ENCODE measurements at regions of chr14 and their contacts with region 1.

Region 1: DNA sequence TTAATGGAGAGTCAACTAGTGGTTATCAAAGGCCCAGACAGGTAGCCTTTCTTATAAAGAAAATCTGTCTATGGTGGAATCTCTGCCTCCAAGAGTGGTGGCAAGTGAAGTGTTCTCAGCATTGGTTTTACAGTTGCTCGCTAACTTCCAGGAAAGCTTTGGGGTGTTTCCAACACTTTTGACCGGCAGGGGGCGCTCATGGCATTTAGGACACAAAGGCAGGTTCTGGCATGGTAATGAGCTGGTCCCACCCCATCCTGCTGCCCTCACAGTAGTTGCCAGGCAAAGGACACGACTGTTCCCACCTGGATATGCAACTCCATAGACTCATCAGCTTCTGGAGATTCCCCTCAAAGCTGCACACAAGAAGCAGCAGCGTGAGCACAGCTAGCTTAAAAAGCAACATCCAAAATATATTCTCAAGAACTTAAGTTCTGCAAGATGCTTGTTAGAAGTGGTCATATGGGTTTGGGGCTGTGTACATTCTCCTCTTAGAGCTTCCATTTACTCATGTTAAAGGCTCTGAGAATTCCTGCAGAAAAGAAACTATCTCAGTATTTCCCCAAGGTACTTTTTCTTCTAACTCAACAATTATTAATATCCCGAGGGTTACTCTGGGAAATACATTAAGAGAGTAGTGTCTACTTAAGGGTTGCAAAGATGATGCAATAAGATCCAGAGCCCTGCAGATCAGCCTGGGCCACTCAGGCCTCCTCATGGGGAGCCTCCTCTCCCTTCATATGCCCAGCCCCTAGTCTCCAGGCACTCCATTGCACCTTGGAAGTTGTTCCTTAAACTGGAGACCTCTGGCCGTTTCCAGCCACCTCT is 14.8 kb downstream of the PROX2 start:
- DNase-seq: peak; percentile 76 to 93 (median 86)
- ATAC-seq: peak; percentile 90
- H3K4me3 ChIP-seq: no peak overlapping the region
- H3K4me3 Mint-ChIP-seq: no peak overlapping the region
- H3K27ac ChIP-seq: no peak overlapping the region
- H3K27ac Mint-ChIP-seq: peak overlapping the region in 3 of 9 donors; percentile 41 to 47 (median 45)
- H3K4me1 ChIP-seq: peaks cover 4 to 6% of the 10 kb centered on the region in 2 donors
- H3K4me1 Mint-ChIP-seq: peaks cover 2 to 21% (median 7%) of the 10 kb centered on the region in 7 donors
- H3K27me3 ChIP-seq: no peaks in the 10 kb centered on the region
- H3K27me3 Mint-ChIP-seq: no peaks in the 10 kb centered on the region

Region 2: DNA sequence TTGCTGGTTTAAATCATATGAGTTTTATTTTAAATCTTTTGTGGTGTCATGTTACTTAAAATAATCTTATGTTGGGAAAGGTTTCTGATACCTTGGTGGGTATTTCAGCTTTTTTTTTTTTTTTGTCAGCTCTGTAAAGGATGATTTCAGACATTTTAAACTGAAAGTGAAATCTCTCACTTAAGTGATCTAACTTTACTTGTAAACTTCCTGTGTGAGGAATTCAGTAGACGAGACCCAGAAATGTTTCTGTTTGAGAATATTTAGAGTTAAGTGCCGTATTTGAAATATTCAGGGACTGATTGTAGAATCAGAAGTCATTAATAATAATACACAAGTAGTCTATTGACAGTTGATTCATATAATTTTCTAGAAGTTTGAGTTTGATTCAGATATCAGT is 23.0 kb before region 1 on chr14:
- CTCF ChIA-PET with region 1: interaction called, 13 read pairs
- POLR2A ChIA-PET with region 1: interaction called, 5 read pairs
- intact Hi-C with region 1: no loop called
- DNase-seq: peak in 7 of 9 donors; percentile 34 to 62 (median 46)
- ATAC-seq: peak; percentile 75
- H3K4me3 ChIP-seq: no peak overlapping the region
- H3K4me3 Mint-ChIP-seq: peak overlapping the region; percentile 30 to 87 (median 82)
- H3K27ac ChIP-seq: peak overlapping the region; percentile 72
- H3K27ac Mint-ChIP-seq: peak overlapping the region; percentile 80 to 99 (median 95)
- H3K4me1 ChIP-seq: peaks cover 48 to 65% of the 10 kb centered on the region in 2 donors
- H3K4me1 Mint-ChIP-seq: peaks cover 47 to 94% (median 86%) of the 10 kb centered on the region in 7 donors
- H3K27me3 ChIP-seq: no peaks in the 10 kb centered on the region
- H3K27me3 Mint-ChIP-seq: no peaks in the 10 kb centered on the region

Region 3: DNA sequence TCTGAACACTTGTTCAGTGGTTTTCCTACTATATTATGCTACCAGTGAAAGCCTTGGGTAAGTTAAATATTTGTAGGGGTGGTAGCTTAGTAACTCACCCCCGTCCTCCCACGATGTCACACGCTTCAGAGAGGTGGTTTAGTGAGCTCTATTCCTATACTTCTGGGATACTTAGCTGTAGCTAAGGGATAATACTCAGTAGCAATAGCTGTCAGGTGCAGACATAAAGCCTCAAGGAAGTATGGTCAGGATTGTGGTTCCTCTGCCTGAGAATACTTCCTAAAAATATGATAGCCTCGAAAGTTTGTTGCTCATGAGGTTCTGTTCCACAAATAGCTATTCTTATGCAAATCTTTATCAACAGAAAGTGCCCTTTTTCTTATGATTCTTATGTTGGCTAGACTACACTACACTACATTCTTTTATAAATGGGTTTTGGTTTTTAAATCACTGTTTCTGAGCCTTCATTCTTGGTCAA is 32.5 kb after region 1 on chr14:
- CTCF ChIA-PET with region 1: interaction called, 10 read pairs
- POLR2A ChIA-PET with region 1: interaction called, 3 read pairs
- intact Hi-C with region 1: no loop called
- DNase-seq: no peak
- ATAC-seq: peak; percentile 47
- H3K4me3 ChIP-seq: no peak overlapping the region
- H3K4me3 Mint-ChIP-seq: no peak overlapping the region
- H3K27ac ChIP-seq: no peak overlapping the region
- H3K27ac Mint-ChIP-seq: peak overlapping the region in 5 of 9 donors; percentile 9 to 78 (median 36)
- H3K4me1 ChIP-seq: no peaks in the 10 kb centered on the region
- H3K4me1 Mint-ChIP-seq: peaks cover 0 to 11% (median 7%) of the 10 kb centered on the region in 7 donors
- H3K27me3 ChIP-seq: no peaks in the 10 kb centered on the region
- H3K27me3 Mint-ChIP-seq: no peaks in the 10 kb centered on the region

Region 4: DNA sequence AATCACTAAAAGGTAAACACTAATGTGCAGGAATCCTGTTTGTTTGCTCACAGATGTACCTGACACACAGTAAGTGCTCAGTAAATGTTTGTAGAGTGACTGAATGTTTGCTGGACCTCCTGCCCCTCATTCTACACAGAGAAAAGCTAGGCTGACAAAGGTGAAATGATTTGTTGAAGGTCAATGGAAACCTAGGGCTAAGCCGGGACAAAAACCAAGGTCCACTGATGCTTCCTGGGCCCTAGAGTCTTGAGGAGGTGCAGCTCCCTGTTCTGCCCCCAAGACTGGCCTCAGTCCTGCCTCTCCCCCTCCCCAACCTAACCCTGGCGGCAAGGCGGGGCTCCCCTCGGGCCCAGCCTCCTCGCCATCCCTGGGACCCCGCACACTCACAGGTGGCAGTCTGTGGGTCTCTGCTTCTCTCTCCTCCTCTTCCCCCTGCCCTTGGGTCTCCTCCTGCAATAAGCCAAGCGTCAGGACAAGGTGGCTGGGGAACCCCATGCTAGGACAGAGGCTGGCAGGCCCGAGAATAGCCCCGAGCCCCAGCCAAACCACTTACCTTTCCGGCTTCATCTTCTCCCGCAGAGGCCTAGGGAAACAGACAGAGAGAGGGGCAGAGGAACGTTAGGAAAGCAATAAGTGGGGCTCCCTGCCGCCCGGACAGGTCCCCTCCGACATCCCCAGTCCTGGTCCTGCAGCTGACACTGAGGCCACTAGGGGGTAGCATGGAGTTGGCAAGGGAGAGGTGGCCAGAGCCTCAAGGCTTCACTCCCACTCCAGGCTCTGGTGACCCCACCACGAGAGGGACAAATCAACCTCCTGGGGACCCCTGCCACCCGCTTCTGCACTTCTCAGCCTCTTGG is 84.9 kb after region 1 on chr14:
- CTCF ChIA-PET with region 1: interaction called, 7 read pairs
- POLR2A ChIA-PET with region 1: no interaction called
- intact Hi-C with region 1: loop called in 1 of 2 experiments (anchors 1 kb)
- DNase-seq: peak; percentile 41 to 79 (median 61)
- ATAC-seq: peak; percentile 78
- H3K4me3 ChIP-seq: no peak overlapping the region
- H3K4me3 Mint-ChIP-seq: peak overlapping the region in 6 of 10 donors; percentile 32 to 67 (median 55)
- H3K27ac ChIP-seq: no peak overlapping the region
- H3K27ac Mint-ChIP-seq: peak overlapping the region in 8 of 9 donors; percentile 17 to 93 (median 52)
- H3K4me1 ChIP-seq: peaks cover 19 to 21% of the 10 kb centered on the region in 2 donors
- H3K4me1 Mint-ChIP-seq: peaks cover 21 to 35% (median 33%) of the 10 kb centered on the region in 7 donors
- H3K27me3 ChIP-seq: no peaks in the 10 kb centered on the region
- H3K27me3 Mint-ChIP-seq: no peaks in the 10 kb centered on the region

Measured in naive thymus-derived CD4-positive, alpha-beta T cell (primary cell).